CD8-positive, alpha-beta T cell (primary cell): ENCODE measurements at regions of chr1 and their contacts with region 1.

Region 1: GRCh38 chr1:214296860-214297745 is 16.1 kb downstream of the SMYD2 start:
- DNase-seq: no peak
- ATAC-seq: no peak
- H3K4me3 ChIP-seq: no peak overlapping the region
- H3K4me3 Mint-ChIP-seq: no peak overlapping the region
- H3K27ac ChIP-seq: no peak overlapping the region
- H3K27ac Mint-ChIP-seq: no peak overlapping the region
- H3K4me1 ChIP-seq: peaks cover 3% of the 10 kb centered on the region
- H3K4me1 Mint-ChIP-seq: peaks cover 34% of the 10 kb centered on the region
- H3K27me3 ChIP-seq: no peaks in the 10 kb centered on the region
- H3K27me3 Mint-ChIP-seq: no peaks in the 10 kb centered on the region
- CTCF ChIP-seq: no peak

Region 2: DNA sequence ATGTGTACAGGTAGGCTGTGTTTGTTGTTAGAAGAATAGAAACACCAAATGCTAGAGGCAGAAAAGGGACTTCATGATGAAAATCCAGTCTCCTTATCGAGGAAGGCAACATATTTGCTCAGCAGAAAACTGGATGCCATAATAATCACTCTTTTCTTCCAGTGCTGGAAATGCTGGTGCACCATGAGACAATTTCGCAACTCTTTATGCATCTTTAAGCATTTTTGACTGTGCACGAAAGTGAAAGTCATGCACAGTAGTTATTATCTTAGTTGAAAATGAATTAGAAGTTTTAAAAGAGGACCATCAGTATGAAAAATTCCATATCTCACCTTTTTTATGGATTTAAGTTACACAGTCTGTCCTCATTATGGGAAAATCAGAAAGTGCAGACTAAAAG is 12.9 kb after region 1 on chr1:
- CTCF ChIA-PET with region 1: interaction called, 3 read pairs
- POLR2A ChIA-PET with region 1: interaction called, 3 read pairs
- intact Hi-C with region 1: loop called in 1 of 2 experiments (anchors 1 kb)
- DNase-seq: no peak
- ATAC-seq: no peak
- H3K4me3 ChIP-seq: peak overlapping the region in 1 of 2 experiments; percentile 6
- H3K4me3 Mint-ChIP-seq: peak overlapping the region; percentile 20
- H3K27ac ChIP-seq: no peak overlapping the region
- H3K27ac Mint-ChIP-seq: no peak overlapping the region
- H3K4me1 ChIP-seq: peaks cover 8% of the 10 kb centered on the region
- H3K4me1 Mint-ChIP-seq: peaks cover 38% of the 10 kb centered on the region
- H3K27me3 ChIP-seq: no peaks in the 10 kb centered on the region
- H3K27me3 Mint-ChIP-seq: no peaks in the 10 kb centered on the region
- CTCF ChIP-seq: no peak

Region 3: DNA sequence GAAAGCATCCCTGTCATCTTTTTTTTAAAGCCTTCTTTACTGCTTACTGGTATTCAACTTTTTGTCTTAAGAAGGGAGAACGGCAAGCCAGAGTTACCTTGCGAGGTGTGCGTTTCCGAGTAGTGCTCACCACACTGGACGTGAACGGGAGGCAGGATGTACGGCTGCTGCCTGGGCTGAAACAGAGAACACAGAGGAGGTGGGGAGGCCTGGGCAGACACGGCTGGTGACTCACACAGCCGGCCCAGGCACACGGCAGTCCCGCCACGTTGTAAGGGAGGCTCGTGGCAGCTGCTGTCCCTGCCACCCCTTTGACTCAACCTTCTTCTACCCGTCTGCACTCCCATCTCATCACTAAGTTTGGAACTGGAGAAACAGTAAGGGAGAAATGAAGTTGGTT is 89.6 kb after region 1 on chr1:
- CTCF ChIA-PET with region 1: no interaction called
- POLR2A ChIA-PET with region 1: no interaction called
- intact Hi-C with region 1: no loop called
- DNase-seq: no peak
- ATAC-seq: no peak
- H3K4me3 ChIP-seq: no peak overlapping the region
- H3K4me3 Mint-ChIP-seq: no peak overlapping the region
- H3K27ac ChIP-seq: no peak overlapping the region
- H3K27ac Mint-ChIP-seq: no peak overlapping the region
- H3K4me1 ChIP-seq: no peaks in the 10 kb centered on the region
- H3K4me1 Mint-ChIP-seq: no peaks in the 10 kb centered on the region
- H3K27me3 ChIP-seq: no peaks in the 10 kb centered on the region
- H3K27me3 Mint-ChIP-seq: no peaks in the 10 kb centered on the region
- CTCF ChIP-seq: no peak